Caco-2 (cell line): ENCODE measurements at regions of chr6 and their contacts with region 1.

Region 1: DNA sequence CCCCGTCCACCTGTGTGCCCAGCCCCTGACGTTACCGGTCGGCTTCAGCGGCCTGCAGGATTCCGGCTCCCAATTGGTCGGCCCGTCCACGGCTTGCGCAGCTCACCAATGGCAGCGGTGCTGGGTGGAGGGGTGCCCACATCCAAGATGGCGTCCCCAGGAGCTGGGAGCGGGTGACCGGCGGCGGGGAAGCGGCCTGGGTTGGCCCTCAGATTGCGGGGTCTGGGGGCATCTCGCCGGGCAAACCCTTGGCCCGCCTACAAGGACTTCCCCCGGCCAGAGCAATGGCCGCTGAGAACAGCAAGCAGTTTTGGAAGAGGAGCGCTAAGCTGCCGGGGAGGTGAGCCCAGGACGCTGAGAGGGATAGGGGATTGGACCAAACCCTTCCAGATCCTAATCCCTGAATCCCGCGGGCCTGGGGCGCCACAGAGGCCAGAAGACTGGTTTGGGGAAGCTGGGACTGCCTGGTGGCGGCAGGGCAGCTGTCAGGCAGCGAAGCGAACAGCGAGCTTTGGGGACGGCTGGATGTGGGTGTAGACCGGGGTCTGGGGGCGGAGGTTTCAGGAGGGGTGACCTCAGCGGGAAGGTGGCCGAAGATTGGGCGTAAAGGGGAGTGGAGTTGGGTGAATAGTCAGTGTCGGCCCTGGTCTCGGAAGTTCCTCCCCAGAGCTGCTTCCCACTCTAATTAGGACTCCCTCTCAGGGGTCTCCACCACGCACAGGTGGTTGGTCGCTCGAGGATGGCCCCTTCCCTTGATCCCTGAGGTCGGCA is at the starts of genes TBC1D22B and TMEM217:
- DNase-seq: peak; percentile 98
- H3K4me3 ChIP-seq: peak within 1 kb of the TSS; percentile 81
- H3K4me3 Mint-ChIP-seq: peak within 1 kb of the TSS; percentile 97
- H3K27ac Mint-ChIP-seq: peak within 1 kb of the TSS; percentile 95
- H3K4me1 ChIP-seq: peaks cover 4% of the 10 kb centered on the region; the same call in 1 of the 2 replicates
- H3K4me1 Mint-ChIP-seq: peaks cover 19% of the 10 kb centered on the region
- H3K27me3 ChIP-seq: no peaks in the 10 kb centered on the region
- H3K27me3 Mint-ChIP-seq: no peaks in the 10 kb centered on the region
- CTCF ChIP-seq: no peak
- total RNA-seq, gene TBC1D22B: 11.8 and 13.5 TPM in 2 replicates
- total RNA-seq, gene TMEM217: 1.6 and 2.6 TPM in 2 replicates

Region 2: GRCh38 chr6:37222125-37222967 is 35.5 kb before region 1 on chr6:
- CTCF ChIA-PET with region 1: interaction called, 4 read pairs
- POLR2A ChIA-PET with region 1: interaction called, 10 read pairs
- intact Hi-C with region 1: loop called (anchors 2 kb)
- DNase-seq: peak; percentile 93 to 96
- H3K4me3 ChIP-seq: peak overlapping the region; percentile 54
- H3K4me3 Mint-ChIP-seq: peak overlapping the region; percentile 78
- H3K27ac Mint-ChIP-seq: peak overlapping the region; percentile 66
- H3K4me1 ChIP-seq: peaks cover 6% of the 10 kb centered on the region; the same call in 1 of the 2 replicates
- H3K4me1 Mint-ChIP-seq: peaks cover 7% of the 10 kb centered on the region
- H3K27me3 ChIP-seq: no peaks in the 10 kb centered on the region
- H3K27me3 Mint-ChIP-seq: no peaks in the 10 kb centered on the region
- CTCF ChIP-seq: no peak

Region 3: GRCh38 chr6:37244430-37245310 is 13.1 kb before region 1 on chr6:
- CTCF ChIA-PET with region 1: interaction called, 4 read pairs
- POLR2A ChIA-PET with region 1: interaction called, 13 read pairs
- intact Hi-C with region 1: no loop called
- DNase-seq: peak; percentile 21 to 52
- H3K4me3 ChIP-seq: no peak overlapping the region
- H3K4me3 Mint-ChIP-seq: no peak overlapping the region
- H3K27ac Mint-ChIP-seq: peak overlapping the region; percentile 60
- H3K4me1 ChIP-seq: peaks cover 44% of the 10 kb centered on the region
- H3K4me1 Mint-ChIP-seq: peaks cover 33% of the 10 kb centered on the region
- H3K27me3 ChIP-seq: no peaks in the 10 kb centered on the region
- H3K27me3 Mint-ChIP-seq: no peaks in the 10 kb centered on the region
- CTCF ChIP-seq: no peak

Region 4: GRCh38 chr6:37272834-37273566 is 15.2 kb after region 1 on chr6:
- CTCF ChIA-PET with region 1: no interaction called
- POLR2A ChIA-PET with region 1: no interaction called
- intact Hi-C with region 1: no loop called
- DNase-seq: no peak
- H3K4me3 ChIP-seq: no peak overlapping the region
- H3K4me3 Mint-ChIP-seq: no peak overlapping the region
- H3K27ac Mint-ChIP-seq: no peak overlapping the region
- H3K4me1 ChIP-seq: no peaks in the 10 kb centered on the region
- H3K4me1 Mint-ChIP-seq: no peaks in the 10 kb centered on the region
- H3K27me3 ChIP-seq: no peaks in the 10 kb centered on the region
- H3K27me3 Mint-ChIP-seq: no peaks in the 10 kb centered on the region
- CTCF ChIP-seq: no peak